PC-9 (cell line): ENCODE measurements at regions of chr5 and their contacts with region 1.

Region 1: DNA sequence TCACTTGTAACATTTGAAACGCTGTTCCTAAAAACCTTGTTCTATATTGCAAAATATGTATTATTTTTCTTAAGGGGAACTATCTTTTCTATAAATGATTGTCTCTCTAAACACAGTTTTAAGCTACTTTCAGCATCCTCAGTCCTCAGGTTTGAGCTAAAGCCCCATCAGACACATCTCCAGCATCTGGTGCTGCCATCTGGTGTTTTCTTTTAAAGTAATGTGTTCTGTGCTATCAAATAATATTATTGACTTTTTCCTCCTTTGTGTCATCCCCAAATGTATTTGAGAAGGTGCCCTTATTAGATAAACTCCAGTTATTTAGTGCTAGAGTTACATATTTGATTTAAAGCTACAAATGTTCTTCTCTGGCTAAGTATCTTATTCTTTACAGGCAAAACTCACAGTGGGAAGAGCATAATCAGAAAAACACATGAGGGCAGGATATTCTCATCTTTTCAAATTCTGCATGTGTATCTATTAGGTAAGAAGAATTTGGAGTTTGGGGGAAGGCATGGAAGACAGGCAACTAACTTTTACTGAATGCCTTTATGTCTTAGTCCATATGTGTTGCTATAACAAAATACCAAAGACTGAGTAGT is 27.5 kb downstream of the ZNF474 start:
- DNase-seq: peak in 1 of 2 experiments; percentile 4
- H3K4me3 ChIP-seq: no peak overlapping the region
- H3K27ac ChIP-seq: no peak overlapping the region
- H3K4me1 ChIP-seq: no peaks in the 10 kb centered on the region
- H3K27me3 ChIP-seq: no peaks in the 10 kb centered on the region
- CTCF ChIP-seq: peak; percentile 63

Region 2: DNA sequence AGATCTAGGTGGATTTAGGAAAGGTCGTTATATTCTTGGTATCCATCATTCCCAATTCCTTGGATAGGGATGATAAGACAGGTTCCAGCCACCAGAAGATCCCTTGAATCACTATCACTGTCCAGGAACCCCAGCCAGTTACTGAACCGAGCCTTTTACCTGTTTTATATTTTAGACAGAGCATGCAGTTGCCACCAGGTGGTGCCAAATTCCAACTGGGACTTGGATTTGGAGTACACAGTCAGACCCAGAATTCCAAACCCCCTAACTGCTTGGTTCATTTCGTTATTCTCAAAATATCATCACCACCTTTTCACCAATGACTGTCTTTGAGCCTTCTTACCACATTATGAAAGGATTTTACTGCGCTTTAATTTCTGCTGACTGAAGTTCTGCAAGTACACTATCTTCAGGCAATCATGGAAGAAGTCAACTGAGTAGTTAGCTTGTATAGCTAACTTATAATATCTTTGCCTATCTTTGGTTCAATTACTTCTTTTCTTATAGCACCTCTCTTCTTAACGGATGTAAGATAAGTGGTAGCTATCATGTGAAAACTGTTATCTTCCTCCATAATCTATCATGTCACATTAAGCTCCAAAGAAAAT is 1500.9 kb before region 1 on chr5:
- CTCF ChIA-PET with region 1: interaction called, 10 read pairs
- POLR2A ChIA-PET with region 1: no interaction called
- intact Hi-C with region 1: no loop called
- DNase-seq: no peak
- H3K4me3 ChIP-seq: no peak overlapping the region
- H3K27ac ChIP-seq: no peak overlapping the region
- H3K4me1 ChIP-seq: no peaks in the 10 kb centered on the region
- H3K27me3 ChIP-seq: no peaks in the 10 kb centered on the region
- CTCF ChIP-seq: peak; percentile 75

Region 3: DNA sequence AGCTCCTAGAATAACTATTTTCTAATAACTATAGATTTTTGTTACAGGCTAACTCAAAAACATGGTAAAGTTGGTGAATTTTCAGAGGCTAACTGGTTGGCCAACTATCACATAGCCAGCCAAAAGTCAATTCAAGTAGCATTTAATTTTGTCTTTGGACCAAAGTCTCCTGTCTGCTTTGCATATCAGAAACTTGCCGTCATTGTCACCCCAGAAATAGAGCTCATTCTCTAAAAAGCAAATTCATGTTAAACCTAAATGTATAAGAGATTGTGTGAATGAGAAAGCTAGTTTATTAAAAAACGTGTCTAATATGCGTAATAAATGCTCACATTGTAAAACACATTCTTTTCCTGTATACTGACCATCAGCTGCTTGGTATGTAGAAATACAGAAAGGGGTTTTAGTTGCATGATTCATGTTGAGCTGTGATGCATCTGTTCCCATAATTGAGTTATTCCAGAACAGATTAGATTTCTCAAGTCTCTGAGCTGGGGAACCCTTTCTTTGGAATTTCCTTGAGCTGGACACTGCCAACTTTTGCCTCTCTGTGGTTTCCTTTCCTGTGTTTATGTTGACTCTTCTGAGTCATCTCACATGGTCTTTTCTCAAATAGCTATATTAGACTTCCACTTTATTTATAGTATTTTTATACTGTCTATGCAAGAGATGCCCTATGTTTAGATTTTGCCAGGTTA is 187.8 kb before region 1 on chr5:
- CTCF ChIA-PET with region 1: interaction called, 3 read pairs
- POLR2A ChIA-PET with region 1: no interaction called
- intact Hi-C with region 1: loop called (anchors 1 kb)
- DNase-seq: peak; percentile 48 to 95
- H3K4me3 ChIP-seq: peak overlapping the region; percentile 32; the same call in 1 of the 2 replicates
- H3K27ac ChIP-seq: peak overlapping the region; percentile 78
- H3K4me1 ChIP-seq: peaks cover 33% of the 10 kb centered on the region
- H3K27me3 ChIP-seq: no peaks in the 10 kb centered on the region
- CTCF ChIP-seq: no peak

Region 4: DNA sequence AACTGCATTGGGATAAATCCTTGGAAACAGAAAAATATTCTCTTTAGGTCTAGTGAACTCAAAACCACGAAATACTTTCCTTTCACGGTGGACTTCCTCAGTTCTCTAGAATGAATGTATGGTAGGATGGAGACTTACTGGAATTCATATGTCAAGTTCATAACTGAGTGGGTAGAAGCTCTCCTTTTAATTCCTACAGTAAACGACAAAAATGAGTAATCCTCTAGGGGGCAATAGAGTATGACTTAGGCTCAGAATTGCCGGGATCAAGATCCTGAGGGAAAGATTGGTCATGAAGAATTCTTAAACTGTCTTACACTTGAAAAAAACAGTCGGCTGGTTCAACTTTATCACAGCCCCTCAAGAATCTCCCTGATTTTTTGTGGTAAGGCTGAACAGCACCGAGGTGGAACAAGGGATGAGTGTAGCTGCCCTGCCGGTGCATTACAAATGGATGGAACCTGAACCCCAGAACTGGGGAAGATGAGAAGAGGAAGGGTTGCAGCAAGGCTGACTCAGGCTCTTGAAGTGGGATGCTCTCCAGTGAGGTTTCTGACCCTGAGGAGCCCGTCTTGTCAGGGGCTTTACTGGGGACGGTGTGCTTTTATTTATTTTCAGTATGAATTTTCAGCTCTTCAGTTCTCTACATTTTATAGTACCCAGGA is 64.8 kb before region 1 on chr5:
- CTCF ChIA-PET with region 1: no interaction called
- POLR2A ChIA-PET with region 1: no interaction called
- intact Hi-C with region 1: loop called (anchors 10 kb)
- DNase-seq: no peak
- H3K4me3 ChIP-seq: no peak overlapping the region
- H3K27ac ChIP-seq: no peak overlapping the region
- H3K4me1 ChIP-seq: no peaks in the 10 kb centered on the region
- H3K27me3 ChIP-seq: no peaks in the 10 kb centered on the region
- CTCF ChIP-seq: peak; percentile 62

Region 5: GRCh38 chr5:122454541-122454940 is 297.7 kb after region 1 on chr5:
- CTCF ChIA-PET with region 1: no interaction called
- POLR2A ChIA-PET with region 1: no interaction called
- intact Hi-C with region 1: no loop called
- DNase-seq: no peak
- H3K4me3 ChIP-seq: no peak overlapping the region
- H3K27ac ChIP-seq: no peak overlapping the region
- H3K4me1 ChIP-seq: peaks cover 6% of the 10 kb centered on the region; the same call in 1 of the 2 replicates
- H3K27me3 ChIP-seq: no peaks in the 10 kb centered on the region
- CTCF ChIP-seq: no peak